ENCODE measurements at regions of chr16 and their contacts with region 1.

Region 1: DNA sequence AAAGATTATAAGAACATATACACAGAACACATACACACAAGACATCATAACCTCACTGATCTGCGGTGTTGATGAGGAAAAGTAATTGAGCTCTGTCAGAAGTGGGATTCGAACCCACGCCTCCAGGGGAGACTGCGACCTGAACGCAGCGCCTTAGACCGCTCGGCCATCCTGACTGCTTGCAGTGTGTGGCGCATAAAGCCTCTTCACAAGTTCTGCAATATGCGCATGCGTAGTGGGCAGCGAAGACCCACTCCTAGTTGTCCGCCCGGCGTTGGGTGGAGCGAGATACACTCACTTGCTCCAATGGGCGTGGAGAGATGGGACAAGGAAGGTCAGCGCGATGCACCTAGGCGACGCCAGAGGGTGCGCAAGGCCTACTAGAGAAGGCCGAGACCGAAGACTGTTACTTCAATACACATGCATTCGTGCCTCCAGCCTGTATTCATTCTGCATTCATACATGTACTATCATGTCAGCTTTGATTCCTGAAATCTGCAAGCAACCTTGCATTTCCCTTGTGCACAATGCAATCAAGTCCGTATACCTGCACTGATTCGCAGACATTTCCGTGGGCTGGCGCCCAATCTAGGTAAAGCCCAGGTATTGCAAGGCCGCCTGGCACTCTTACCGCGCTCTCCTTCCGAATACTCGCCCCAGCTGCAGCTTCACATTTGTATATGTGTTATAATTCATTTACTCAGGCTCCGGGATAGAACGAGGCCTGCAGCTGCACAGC is 16.1 kb upstream of the PLLP start:
- DNase-seq: peak; percentile 100
- H3K4me3 Mint-ChIP-seq: no peak overlapping the region
- H3K27ac Mint-ChIP-seq: no peak overlapping the region
- H3K4me1 Mint-ChIP-seq: peaks cover 10% of the 10 kb centered on the region
- H3K27me3 Mint-ChIP-seq: no peaks in the 10 kb centered on the region

Region 2: GRCh38 chr16:56729735-56730662 is 570.6 kb before region 1 on chr16 and contains the start of gene NUP93:
- CTCF ChIA-PET with region 1: no interaction called
- POLR2A ChIA-PET with region 1: no interaction called
- intact Hi-C with region 1: no loop called
- DNase-seq: peak; percentile 94
- H3K4me3 Mint-ChIP-seq: peak within 1 kb of the TSS; percentile 88
- H3K27ac Mint-ChIP-seq: peak within 1 kb of the TSS; percentile 51
- H3K4me1 Mint-ChIP-seq: peaks cover 16% of the 10 kb centered on the region
- H3K27me3 Mint-ChIP-seq: no peaks in the 10 kb centered on the region
- total RNA-seq, gene NUP93: 131 to 133 TPM

Region 3: DNA sequence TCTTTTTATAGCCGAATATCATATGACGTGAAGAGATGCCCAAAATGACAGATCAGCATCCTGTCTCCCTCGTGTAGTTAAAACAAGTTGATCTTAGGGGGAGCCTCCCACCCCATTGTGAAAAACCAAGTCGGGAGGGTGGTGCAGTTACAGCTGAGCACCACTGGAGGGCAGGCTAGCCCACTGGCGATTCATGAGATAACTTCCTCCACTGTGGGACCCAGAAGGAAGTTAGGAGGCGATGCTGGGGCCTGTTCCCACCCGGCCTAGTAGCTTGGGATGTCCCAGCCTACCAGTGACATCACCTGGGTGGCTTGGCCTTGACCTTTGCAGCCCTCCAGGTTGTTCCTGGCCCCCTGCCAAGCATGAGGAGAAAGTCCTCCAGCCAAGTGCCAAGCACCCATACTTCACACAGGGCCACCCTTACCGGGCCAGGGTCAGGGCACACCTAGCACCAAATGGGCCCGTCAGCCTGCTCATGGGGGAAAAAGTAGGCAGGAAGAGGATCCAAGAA is 216.2 kb before region 1 on chr16:
- CTCF ChIA-PET with region 1: no interaction called
- POLR2A ChIA-PET with region 1: no interaction called
- intact Hi-C with region 1: loop called (anchors 5 kb)
- DNase-seq: peak; percentile 85
- H3K4me3 Mint-ChIP-seq: no peak overlapping the region
- H3K27ac Mint-ChIP-seq: no peak overlapping the region
- H3K4me1 Mint-ChIP-seq: peaks cover 6% of the 10 kb centered on the region
- H3K27me3 Mint-ChIP-seq: no peaks in the 10 kb centered on the region

Region 4: GRCh38 chr16:57289391-57290257 is 10.9 kb before region 1 on chr16:
- CTCF ChIA-PET with region 1: interaction called, 19 read pairs
- POLR2A ChIA-PET with region 1: no interaction called
- intact Hi-C with region 1: loop called (anchors 1 kb)
- DNase-seq: no peak
- H3K4me3 Mint-ChIP-seq: no peak overlapping the region
- H3K27ac Mint-ChIP-seq: no peak overlapping the region
- H3K4me1 Mint-ChIP-seq: peaks cover 19% of the 10 kb centered on the region
- H3K27me3 Mint-ChIP-seq: peaks cover 2% of the 10 kb centered on the region

Region 5: GRCh38 chr16:57335366-57335765 is 34.8 kb after region 1 on chr16:
- CTCF ChIA-PET with region 1: no interaction called
- POLR2A ChIA-PET with region 1: no interaction called
- intact Hi-C with region 1: no loop called
- DNase-seq: no peak
- H3K4me3 Mint-ChIP-seq: no peak overlapping the region
- H3K27ac Mint-ChIP-seq: no peak overlapping the region
- H3K4me1 Mint-ChIP-seq: peaks cover 8% of the 10 kb centered on the region
- H3K27me3 Mint-ChIP-seq: peaks cover 9% of the 10 kb centered on the region

Region 6: DNA sequence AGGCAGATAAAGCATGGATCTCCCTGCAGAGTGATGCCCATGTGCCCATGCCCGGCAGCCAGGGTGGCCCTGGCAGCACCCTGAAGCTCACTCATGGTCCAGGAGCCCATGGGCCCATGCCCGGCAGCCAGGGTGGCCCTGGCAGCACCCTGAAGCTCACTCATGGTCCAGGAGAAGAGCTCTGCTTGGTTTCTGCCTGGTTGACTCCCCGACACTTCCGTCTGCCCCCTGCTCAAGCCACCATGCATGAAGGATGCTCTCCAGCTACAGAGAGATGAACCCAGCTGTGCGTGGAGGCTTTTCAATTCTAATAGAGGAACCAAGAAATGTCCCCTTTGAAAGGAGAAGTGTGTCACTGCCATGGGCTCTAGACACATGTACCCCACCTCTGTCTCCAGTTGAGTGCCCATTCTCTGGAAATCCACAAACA is 112.8 kb after region 1 on chr16:
- CTCF ChIA-PET with region 1: interaction called, 210 read pairs
- POLR2A ChIA-PET with region 1: interaction called, 6 read pairs
- intact Hi-C with region 1: loop called (anchors 1 kb)
- DNase-seq: no peak
- H3K4me3 Mint-ChIP-seq: no peak overlapping the region
- H3K27ac Mint-ChIP-seq: no peak overlapping the region
- H3K4me1 Mint-ChIP-seq: peaks cover 10% of the 10 kb centered on the region
- H3K27me3 Mint-ChIP-seq: no peaks in the 10 kb centered on the region

Region 7: DNA sequence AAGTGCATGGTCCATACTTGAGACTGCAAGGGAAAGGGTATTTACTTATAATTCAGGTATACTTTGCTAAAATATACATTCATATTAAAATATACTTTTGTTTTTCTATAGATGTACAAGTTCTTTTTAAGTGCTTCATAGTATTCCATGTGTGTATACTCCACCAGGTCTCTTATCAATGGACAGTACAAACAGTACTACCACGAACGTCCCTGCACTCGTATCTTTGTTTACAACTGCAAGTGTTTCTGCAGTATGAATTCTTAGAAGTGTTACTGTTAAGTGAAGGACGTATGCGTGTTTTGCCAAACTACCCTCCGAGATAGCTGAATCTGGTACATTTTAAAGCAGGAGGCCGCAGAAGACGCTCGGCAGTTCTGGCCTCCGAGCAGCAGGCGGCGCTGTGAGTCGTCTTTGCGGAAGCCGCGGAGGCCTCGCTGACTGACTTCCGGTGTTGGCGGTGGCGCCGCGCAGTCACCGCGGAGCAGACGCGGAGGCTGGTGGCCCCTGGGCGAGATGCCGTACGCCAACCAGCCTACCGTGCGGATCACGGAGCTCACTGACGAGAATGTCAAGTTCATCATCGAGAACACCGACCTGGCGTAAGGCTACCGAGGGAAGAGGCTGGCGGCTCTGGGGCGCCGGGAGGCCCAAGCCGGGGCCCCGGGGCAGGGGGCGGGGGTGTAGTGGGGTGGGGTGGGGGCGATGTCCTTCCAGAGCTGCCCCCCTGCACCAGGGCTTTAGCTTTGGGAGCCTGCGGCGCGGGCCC is 161.8 kb after region 1 on chr16 and contains the start of gene POLR2C:
- CTCF ChIA-PET with region 1: interaction called, 8 read pairs
- POLR2A ChIA-PET with region 1: interaction called, 3 read pairs
- intact Hi-C with region 1: loop called (anchors 5 kb)
- DNase-seq: peak; percentile 95
- H3K4me3 Mint-ChIP-seq: peak within 1 kb of the TSS; percentile 100
- H3K27ac Mint-ChIP-seq: peak within 1 kb of the TSS; percentile 98
- H3K4me1 Mint-ChIP-seq: peaks cover 34% of the 10 kb centered on the region
- H3K27me3 Mint-ChIP-seq: no peaks in the 10 kb centered on the region
- total RNA-seq, gene POLR2C: 52.5 to 57.0 TPM

Region 8: DNA sequence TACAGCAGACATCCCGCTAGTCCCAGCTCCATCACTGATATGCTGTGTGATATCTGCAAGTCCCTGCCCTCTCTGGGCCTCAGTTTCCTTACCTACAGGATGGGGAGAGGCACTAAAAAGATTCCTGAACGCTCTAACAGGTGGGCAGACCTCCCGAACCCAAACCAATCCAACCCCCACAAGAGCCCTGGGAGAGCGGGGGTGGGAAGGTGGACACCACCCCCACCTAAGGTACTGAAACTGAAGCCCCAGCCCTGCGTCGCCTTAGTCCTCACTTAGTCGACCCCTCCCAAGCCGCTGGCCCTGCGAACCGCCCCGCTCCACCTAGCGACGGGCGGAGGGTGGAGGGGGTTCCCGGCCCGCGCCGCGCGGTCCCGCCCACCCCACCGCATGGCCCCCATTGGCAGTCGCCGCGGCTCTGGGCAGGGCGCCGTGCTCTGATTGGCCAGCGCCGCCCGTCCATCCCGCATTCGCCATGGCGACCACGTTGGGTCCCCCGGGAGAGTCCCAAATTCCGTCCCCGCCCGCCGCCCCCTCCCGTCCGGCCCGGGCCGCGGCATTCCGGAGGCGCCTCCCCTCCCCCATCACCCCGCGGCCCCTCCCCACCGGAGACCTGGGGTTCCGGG is 235.2 kb after region 1 on chr16:
- CTCF ChIA-PET with region 1: interaction called, 3 read pairs
- POLR2A ChIA-PET with region 1: no interaction called
- intact Hi-C with region 1: loop called (anchors 5 kb)
- DNase-seq: peak; percentile 97
- H3K4me3 Mint-ChIP-seq: peak overlapping the region; percentile 86
- H3K27ac Mint-ChIP-seq: peak overlapping the region; percentile 94
- H3K4me1 Mint-ChIP-seq: peaks cover 72% of the 10 kb centered on the region
- H3K27me3 Mint-ChIP-seq: no peaks in the 10 kb centered on the region

Region 9: GRCh38 chr16:58276346-58276951 is 975.9 kb after region 1 on chr16:
- CTCF ChIA-PET with region 1: no interaction called
- POLR2A ChIA-PET with region 1: no interaction called
- intact Hi-C with region 1: no loop called
- DNase-seq: no peak
- H3K4me3 Mint-ChIP-seq: no peak overlapping the region
- H3K27ac Mint-ChIP-seq: no peak overlapping the region
- H3K4me1 Mint-ChIP-seq: no peaks in the 10 kb centered on the region
- H3K27me3 Mint-ChIP-seq: peaks cover 17% of the 10 kb centered on the region